GM23248 (cell line): ENCODE measurements at regions of chr6 and their contacts with region 1.

Region 1: DNA sequence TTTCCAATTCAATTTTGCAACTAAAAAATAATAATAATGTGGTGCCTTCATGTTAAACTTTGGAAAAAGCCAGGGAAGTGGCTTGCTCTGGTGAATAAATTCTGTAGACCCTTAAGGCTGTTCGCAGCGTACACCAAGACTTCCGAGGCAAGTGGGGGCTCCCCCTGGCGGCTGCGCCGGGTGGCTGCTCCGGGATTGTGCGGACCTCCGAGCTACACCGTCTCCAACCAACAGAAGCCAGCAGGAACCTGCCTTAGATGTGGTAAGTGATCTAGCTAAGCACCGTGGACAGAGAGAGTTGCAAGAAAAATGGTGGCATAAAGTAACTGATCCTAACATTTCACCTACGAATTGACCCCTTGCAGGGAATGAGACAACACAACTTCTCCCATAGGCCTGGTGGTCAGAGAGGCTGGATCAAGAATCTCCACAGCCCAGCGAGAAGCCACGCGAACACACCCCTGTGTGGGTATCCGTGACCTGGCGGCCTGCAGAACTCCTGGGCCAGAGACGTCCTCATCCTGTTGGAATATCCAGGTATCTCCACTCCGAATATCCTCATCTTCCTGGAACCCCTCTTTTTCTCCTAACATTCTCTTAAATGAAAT is 69.6 kb downstream of the TBXT start:
- DNase-seq: peak; percentile 83
- H3K4me3 ChIP-seq: peak overlapping the region; percentile 75
- H3K27ac ChIP-seq: peak overlapping the region; percentile 63
- H3K4me1 ChIP-seq: peaks cover 7% of the 10 kb centered on the region
- H3K27me3 ChIP-seq: peaks cover 19% of the 10 kb centered on the region

Region 2: GRCh38 chr6:165782134-165782533 is 315.9 kb before region 1 on chr6:
- in situ Hi-C with region 1: no loop called
- DNase-seq: no peak
- H3K4me3 ChIP-seq: no peak overlapping the region
- H3K27ac ChIP-seq: no peak overlapping the region
- H3K4me1 ChIP-seq: no peaks in the 10 kb centered on the region
- H3K27me3 ChIP-seq: no peaks in the 10 kb centered on the region

Region 3: GRCh38 chr6:165884813-165885765 is 212.9 kb before region 1 on chr6:
- in situ Hi-C with region 1: loop called (anchors 5 kb)
- DNase-seq: peak; percentile 86
- H3K4me3 ChIP-seq: no peak overlapping the region
- H3K27ac ChIP-seq: no peak overlapping the region
- H3K4me1 ChIP-seq: peaks cover 6% of the 10 kb centered on the region; the same call in 1 of the 2 replicates
- H3K27me3 ChIP-seq: peaks cover 7% of the 10 kb centered on the region; the same call in 1 of the 2 replicates